CD4-positive, alpha-beta T cell (primary cell): ENCODE measurements at regions of chr3 and their contacts with region 1.

Region 1: DNA sequence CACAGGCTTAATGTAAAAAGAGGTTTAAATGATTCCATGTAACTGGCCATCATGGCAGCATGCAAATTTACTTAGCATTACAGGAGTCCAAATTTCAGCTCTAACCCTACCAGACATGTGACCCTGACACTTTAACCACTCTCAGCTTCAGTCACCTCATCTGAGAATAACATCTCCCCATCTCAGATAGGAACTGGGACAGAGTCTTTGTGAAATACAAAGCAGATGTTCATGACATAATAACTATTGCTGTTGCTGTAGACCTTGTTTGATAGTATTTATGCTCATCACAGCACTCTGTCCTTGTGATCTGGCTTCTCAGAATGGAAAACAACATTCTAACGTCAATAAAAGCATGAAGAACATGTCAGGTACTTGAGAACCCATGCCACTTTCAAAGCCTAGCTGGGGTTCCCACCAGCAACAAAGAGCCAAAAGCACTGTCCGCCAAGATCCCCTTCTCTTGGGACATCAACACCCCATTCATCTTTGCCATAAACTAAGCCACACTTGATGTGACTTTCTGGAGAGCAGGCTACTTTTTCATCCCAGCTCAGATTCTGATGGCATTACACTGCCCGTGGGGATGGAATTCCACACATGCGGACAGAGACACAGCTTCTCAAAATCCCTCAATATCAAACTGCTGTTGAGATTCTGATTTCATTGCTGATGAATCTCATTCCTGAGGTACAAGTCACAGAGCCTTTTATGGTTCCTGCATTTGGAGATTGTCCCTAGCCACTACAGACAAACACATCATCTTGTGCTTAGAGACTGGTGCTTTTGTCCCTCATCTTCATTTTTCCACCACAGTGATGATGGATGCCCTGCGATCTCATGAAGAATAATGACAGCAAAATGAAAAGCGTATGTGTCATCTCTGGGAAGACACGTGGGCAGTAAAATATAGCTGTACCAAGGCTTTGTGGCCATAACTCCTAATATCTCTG is 202.7 kb downstream of the TNIK start:
- DNase-seq: peak in 1 of 14 experiments; percentile 34
- ATAC-seq: peak; percentile 50
- H3K4me3 ChIP-seq: no peak overlapping the region
- H3K4me3 Mint-ChIP-seq: peak overlapping the region; percentile 42
- H3K27ac ChIP-seq: peak overlapping the region; percentile 61 to 78
- H3K27ac Mint-ChIP-seq: peak overlapping the region; percentile 95
- H3K4me1 ChIP-seq: peaks cover 60% of the 10 kb centered on the region
- H3K4me1 Mint-ChIP-seq: peaks cover 96% of the 10 kb centered on the region
- H3K27me3 ChIP-seq: no peaks in the 10 kb centered on the region
- H3K27me3 Mint-ChIP-seq: no peaks in the 10 kb centered on the region
- CTCF ChIP-seq: no peak

Region 2: GRCh38 chr3:170852324-170852723 is 405.2 kb before region 1 on chr3:
- CTCF ChIA-PET with region 1: no interaction called
- POLR2A ChIA-PET with region 1: no interaction called
- intact Hi-C with region 1: no loop called
- DNase-seq: no peak
- ATAC-seq: no peak
- H3K4me3 ChIP-seq: no peak overlapping the region
- H3K4me3 Mint-ChIP-seq: no peak overlapping the region
- H3K27ac ChIP-seq: no peak overlapping the region
- H3K27ac Mint-ChIP-seq: no peak overlapping the region
- H3K4me1 ChIP-seq: no peaks in the 10 kb centered on the region
- H3K4me1 Mint-ChIP-seq: no peaks in the 10 kb centered on the region
- H3K27me3 ChIP-seq: no peaks in the 10 kb centered on the region
- H3K27me3 Mint-ChIP-seq: peaks cover 4% of the 10 kb centered on the region
- CTCF ChIP-seq: no peak

Region 3: DNA sequence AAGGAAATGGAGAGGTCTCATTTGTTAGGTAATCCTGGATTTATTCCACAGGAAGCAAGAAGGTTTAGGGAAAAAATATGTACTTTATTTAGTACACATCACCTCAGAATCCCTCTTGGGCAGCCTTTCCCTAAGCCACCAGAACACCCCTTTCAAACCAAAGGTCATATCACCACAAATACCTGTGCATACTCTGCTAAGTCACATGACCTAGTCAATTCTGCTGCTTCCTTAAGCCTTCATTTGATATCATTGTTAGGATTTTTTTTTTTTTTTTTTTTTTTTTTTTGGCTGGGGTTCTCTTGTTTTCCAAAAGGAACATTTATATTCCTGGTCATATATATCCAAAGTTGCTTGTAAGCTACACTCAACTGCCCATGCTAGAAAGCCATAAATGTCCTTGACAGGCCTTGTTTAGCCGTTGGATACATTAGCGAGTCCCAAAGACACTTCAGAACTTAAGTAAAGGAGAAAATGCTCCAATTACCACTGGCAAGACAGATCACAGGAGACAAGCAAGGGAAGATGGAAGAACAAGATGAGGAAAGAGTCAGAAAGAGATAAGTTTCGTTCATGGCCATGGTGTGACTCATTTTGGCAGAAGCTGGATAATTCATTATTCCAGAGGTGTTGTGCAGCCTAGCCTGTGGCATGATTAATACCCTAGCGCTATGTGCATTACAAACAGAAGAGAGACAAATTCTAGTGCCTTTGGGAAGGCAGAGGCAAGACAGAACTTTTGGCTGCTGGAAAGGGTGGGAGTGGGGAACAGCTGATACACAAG is 75.4 kb before region 1 on chr3:
- CTCF ChIA-PET with region 1: no interaction called
- POLR2A ChIA-PET with region 1: no interaction called
- intact Hi-C with region 1: no loop called
- DNase-seq: no peak
- ATAC-seq: no peak
- H3K4me3 ChIP-seq: no peak overlapping the region
- H3K4me3 Mint-ChIP-seq: no peak overlapping the region
- H3K27ac ChIP-seq: no peak overlapping the region
- H3K27ac Mint-ChIP-seq: no peak overlapping the region
- H3K4me1 ChIP-seq: peaks cover 5% of the 10 kb centered on the region
- H3K4me1 Mint-ChIP-seq: peaks cover 55% of the 10 kb centered on the region
- H3K27me3 ChIP-seq: no peaks in the 10 kb centered on the region
- H3K27me3 Mint-ChIP-seq: no peaks in the 10 kb centered on the region
- CTCF ChIP-seq: no peak

Region 4: DNA sequence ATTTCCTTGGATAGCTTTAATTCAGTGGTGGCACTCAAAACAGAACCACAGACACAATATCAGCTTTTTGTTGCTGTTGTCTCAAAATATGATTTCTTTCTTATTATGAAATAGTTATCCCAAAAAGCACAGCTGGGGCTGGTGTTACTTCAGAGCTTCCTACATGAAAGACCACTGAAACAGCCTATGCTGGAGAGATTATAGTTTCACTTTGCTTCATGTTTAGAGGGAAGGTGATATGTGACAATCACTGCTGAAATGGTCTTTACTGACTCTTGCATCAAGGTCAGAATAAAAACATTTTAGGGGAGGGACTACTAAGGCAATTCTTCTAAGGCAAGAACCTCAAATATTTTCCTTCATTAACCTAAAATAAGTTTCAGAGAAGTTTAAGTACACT is 12.0 kb after region 1 on chr3:
- CTCF ChIA-PET with region 1: interaction called, 7 read pairs
- POLR2A ChIA-PET with region 1: interaction called, 16 read pairs
- intact Hi-C with region 1: no loop called
- DNase-seq: peak in 1 of 14 experiments; percentile 67
- ATAC-seq: peak; percentile 64
- H3K4me3 ChIP-seq: peak overlapping the region; percentile 26
- H3K4me3 Mint-ChIP-seq: peak overlapping the region; percentile 26
- H3K27ac ChIP-seq: no peak overlapping the region
- H3K27ac Mint-ChIP-seq: peak overlapping the region; percentile 77
- H3K4me1 ChIP-seq: peaks cover 33% of the 10 kb centered on the region
- H3K4me1 Mint-ChIP-seq: peaks cover 91% of the 10 kb centered on the region
- H3K27me3 ChIP-seq: no peaks in the 10 kb centered on the region
- H3K27me3 Mint-ChIP-seq: no peaks in the 10 kb centered on the region
- CTCF ChIP-seq: no peak

Region 5: GRCh38 chr3:171328419-171329082 is 71.0 kb after region 1 on chr3:
- CTCF ChIA-PET with region 1: no interaction called
- POLR2A ChIA-PET with region 1: interaction called, 9 read pairs
- intact Hi-C with region 1: loop called in 1 of 2 experiments (anchors 10 kb)
- DNase-seq: peak in 13 of 14 experiments; percentile 22 to 83 (median 40)
- ATAC-seq: peak; percentile 98
- H3K4me3 ChIP-seq: no peak overlapping the region
- H3K4me3 Mint-ChIP-seq: peak overlapping the region; percentile 3
- H3K27ac ChIP-seq: no peak overlapping the region
- H3K27ac Mint-ChIP-seq: peak overlapping the region; percentile 14
- H3K4me1 ChIP-seq: peaks cover 17% of the 10 kb centered on the region
- H3K4me1 Mint-ChIP-seq: peaks cover 71% of the 10 kb centered on the region
- H3K27me3 ChIP-seq: no peaks in the 10 kb centered on the region
- H3K27me3 Mint-ChIP-seq: no peaks in the 10 kb centered on the region
- CTCF ChIP-seq: peak; percentile 35